WTC11 (cell line): ENCODE measurements at regions of chr15 and their contacts with region 1.

Region 1: DNA sequence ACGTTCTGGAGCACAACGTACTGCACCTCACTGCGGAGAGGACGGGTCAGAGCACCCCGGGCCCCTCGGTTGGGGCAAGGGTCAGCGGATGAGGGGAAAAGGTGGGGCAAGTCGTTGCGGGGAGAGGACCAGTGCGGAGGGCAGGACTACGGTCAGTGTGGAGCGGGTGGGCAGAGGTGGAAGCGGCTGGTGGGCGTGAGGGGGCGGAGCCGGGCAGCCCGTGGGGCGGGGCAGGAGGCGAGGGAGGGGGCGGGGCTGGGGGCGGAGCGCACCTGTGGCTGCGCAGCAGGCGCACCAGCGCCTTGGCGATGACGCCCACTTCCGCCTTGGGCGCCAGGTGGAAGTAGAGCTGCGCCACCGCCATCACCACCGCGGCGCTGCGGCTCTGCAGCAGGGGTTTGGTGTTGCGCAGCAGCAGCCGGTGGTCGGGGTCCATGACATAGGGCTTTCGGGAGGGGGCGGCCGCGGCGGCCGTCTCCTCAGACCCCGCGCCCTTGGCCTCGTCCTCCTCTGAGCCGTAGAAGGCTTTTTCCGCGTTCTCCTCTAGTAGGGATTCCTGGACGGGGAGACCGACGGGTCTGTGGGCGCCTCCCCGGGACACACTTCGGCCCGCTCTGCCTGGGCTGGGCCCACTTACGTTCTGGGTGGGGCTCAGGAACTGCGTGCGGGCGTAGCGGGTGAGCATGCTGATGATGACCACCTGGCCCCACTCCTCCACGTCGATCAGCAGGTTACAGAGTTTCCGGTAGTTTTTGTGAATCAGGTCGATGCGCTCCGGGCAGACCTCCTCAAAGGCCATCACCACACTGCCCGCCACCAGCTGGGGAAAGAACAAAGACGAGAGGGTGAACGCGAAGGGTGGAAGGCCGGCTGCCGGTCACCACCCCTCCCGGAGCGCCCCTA is 29.2 kb downstream of the AP3B2 start:
- DNase-seq: peak; percentile 88
- ATAC-seq: peak; percentile 91
- H3K4me3 Mint-ChIP-seq: peak overlapping the region; percentile 96
- H3K27ac Mint-ChIP-seq: peak overlapping the region; percentile 95
- H3K4me1 Mint-ChIP-seq: peaks cover 16% of the 10 kb centered on the region
- H3K27me3 Mint-ChIP-seq: peaks cover 19% of the 10 kb centered on the region
- CTCF ChIP-seq: no peak

Region 2: GRCh38 chr15:82653483-82654168 is 26.8 kb before region 1 on chr15:
- CTCF ChIA-PET with region 1: no interaction called
- POLR2A ChIA-PET with region 1: no interaction called
- DNase-seq: no peak
- ATAC-seq: no peak
- H3K4me3 Mint-ChIP-seq: no peak overlapping the region
- H3K27ac Mint-ChIP-seq: no peak overlapping the region
- H3K4me1 Mint-ChIP-seq: peaks cover 5% of the 10 kb centered on the region
- H3K27me3 Mint-ChIP-seq: peaks cover 36% of the 10 kb centered on the region
- CTCF ChIP-seq: no peak

Region 3: GRCh38 chr15:82709421-82710207 is 29.2 kb after region 1 on chr15 and contains the start of gene AP3B2:
- CTCF ChIA-PET with region 1: interaction called, 10 read pairs
- POLR2A ChIA-PET with region 1: interaction called, 7 read pairs
- DNase-seq: peak; percentile 80
- ATAC-seq: peak; percentile 86
- H3K4me3 Mint-ChIP-seq: peak within 1 kb of the TSS; percentile 67
- H3K27ac Mint-ChIP-seq: no peak within 1 kb of the TSS
- H3K4me1 Mint-ChIP-seq: peaks cover 6% of the 10 kb centered on the region
- H3K27me3 Mint-ChIP-seq: peaks cover 18% of the 10 kb centered on the region
- CTCF ChIP-seq: no peak
- total RNA-seq, gene AP3B2: 15.2 to 17.7 TPM (median 17.5 TPM) in 3 replicates

Region 4: DNA sequence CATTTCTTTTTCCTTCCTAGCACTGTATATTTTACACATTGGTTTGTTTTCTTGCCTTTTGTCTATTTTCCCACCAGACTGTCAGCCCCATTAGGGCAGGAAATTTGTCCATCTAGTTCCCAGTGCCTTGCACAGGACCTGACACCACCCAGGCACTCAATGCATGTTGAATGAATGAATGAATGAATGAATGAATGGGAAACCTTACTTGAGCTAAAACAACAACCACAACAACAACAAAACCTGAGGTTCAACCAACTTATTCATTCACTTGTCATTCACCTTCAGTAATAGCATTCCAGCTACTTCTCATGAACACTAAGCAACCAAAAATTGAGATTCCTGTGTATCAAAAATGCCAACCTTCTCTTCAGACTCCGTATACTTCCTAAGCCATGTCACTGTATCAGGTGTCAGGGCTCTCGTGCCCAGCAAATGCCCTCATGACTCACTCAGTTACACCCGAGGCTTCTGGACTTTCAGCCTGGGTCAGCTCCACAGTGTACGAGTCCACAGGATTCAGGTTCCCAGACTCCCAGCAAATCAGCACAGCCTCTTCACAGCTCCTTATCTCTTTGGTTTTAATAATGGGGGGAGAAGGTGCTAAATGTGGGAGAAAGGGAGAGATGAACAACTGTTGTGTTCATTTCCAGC is 88.1 kb after region 1 on chr15:
- CTCF ChIA-PET with region 1: no interaction called
- POLR2A ChIA-PET with region 1: no interaction called
- DNase-seq: no peak
- ATAC-seq: no peak
- H3K4me3 Mint-ChIP-seq: no peak overlapping the region
- H3K27ac Mint-ChIP-seq: no peak overlapping the region
- H3K4me1 Mint-ChIP-seq: peaks cover 9% of the 10 kb centered on the region
- H3K27me3 Mint-ChIP-seq: peaks cover 3% of the 10 kb centered on the region; the same call in 1 of the 2 replicates
- CTCF ChIP-seq: no peak